ENCODE measurements at regions of chr5 and their contacts with region 1.

Region 1: DNA sequence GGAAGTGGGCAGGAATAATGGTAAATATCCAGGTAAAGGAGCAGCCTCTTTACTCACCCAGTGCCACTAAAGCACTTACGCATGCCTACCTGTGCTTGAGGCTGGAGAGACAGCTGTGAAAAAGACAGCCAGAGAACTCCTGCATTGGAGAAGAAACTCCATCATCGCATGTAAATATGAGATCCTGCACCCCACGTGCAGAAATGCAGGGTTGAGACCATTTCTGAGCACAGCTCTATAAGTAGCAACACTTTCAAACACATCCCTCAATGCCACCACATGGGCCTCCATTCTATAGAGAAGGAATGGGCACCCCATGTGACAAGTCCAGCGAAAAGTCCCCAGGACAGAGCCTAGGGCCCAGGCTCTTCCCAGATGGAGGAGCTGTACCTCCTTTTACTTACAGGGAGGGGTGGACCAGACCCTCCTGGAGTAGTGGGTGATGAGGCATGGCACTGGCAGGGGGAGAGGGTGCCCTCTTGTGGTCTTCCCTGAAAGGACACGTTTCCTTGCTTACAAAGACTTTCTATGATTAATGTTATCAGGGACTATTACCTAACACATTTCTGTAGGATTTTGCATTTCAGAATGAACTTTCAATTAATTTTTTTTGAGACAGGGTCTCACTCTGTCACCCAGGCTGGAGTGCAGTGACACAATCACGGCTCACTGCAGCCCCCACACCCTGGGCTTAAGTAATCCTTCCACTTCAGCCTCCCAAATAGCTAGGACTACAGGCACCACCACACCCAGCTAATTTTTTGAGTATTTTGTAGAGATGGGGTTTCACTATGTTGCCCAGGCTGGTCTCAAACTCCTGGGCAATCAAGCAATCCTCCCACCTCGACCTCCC is 55.3 kb upstream of the IL17B start:
- DNase-seq: peak; percentile 62 to 87
- H3K4me3 ChIP-seq: no peak overlapping the region
- H3K27ac ChIP-seq: no peak overlapping the region
- H3K4me1 ChIP-seq: peaks cover 0 to 5% (median 2%) of the 10 kb centered on the region in 4 experiments; a peak in 2 of 7 replicates
- H3K27me3 ChIP-seq: no peaks in the 10 kb centered on the region
- CTCF ChIP-seq: peak; percentile 80 to 90 (median 88)
- EP300 ChIP-seq: no peak
- POLR2A ChIP-seq: no peak
- RAD21 ChIP-seq: peak; percentile 82 to 88

Region 2: DNA sequence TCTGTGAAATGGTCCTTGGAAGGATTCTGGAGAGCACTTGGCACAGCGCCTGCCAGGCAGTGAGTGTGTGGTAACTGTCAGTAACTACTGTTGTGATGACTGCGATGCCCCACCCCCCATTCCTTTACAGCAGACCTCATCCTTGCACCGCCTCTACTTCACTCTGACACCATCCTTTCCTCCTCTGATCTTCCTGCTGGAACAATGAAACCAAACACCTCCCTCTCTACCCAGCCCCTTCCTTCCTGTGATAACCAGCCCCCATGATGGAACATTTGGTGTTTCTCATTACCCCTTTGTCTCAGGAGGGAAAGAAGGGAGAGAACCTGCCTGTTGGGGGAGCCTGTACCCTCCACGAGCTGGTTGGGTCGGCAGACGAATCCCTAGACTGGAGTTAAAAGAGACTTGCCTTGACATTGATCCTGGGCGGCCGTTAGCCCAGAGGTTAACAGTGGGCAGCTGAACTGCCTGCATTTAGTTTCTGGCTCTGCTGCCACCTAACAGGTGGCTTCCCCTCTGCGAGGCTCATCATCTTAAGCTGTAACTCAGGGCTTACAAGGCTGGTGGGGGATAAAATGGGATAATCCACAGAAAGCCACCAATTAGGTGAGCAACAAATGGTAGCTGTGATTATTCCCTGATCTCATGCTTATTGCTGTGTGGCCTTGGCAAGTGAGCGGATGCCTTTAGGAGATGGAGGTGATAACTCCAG is 123.3 kb before region 1 on chr5:
- CTCF ChIA-PET with region 1: interaction called, 17 read pairs
- POLR2A ChIA-PET with region 1: no interaction called
- DNase-seq: no peak
- H3K4me3 ChIP-seq: no peak overlapping the region
- H3K27ac ChIP-seq: no peak overlapping the region
- H3K4me1 ChIP-seq: peaks cover 0 to 3% (median 1%) of the 10 kb centered on the region in 4 experiments; a peak in 1 of 7 replicates
- H3K27me3 ChIP-seq: no peaks in the 10 kb centered on the region
- CTCF ChIP-seq: peak in 1 of 3 experiments; percentile 13; a peak in 1 of 4 replicates
- EP300 ChIP-seq: no peak
- POLR2A ChIP-seq: no peak
- RAD21 ChIP-seq: no peak

Region 3: GRCh38 chr5:149400304-149400703 is 34.1 kb before region 1 on chr5:
- CTCF ChIA-PET with region 1: interaction called, 1,310 read pairs
- POLR2A ChIA-PET with region 1: interaction called, 3 read pairs
- DNase-seq: no peak
- H3K4me3 ChIP-seq: no peak overlapping the region
- H3K27ac ChIP-seq: no peak overlapping the region
- H3K4me1 ChIP-seq: no peaks in the 10 kb centered on the region; a peak in 1 of 7 replicates
- H3K27me3 ChIP-seq: no peaks in the 10 kb centered on the region; a peak in 1 of 7 replicates
- CTCF ChIP-seq: no peak
- EP300 ChIP-seq: no peak
- POLR2A ChIP-seq: no peak
- RAD21 ChIP-seq: no peak

Region 4: DNA sequence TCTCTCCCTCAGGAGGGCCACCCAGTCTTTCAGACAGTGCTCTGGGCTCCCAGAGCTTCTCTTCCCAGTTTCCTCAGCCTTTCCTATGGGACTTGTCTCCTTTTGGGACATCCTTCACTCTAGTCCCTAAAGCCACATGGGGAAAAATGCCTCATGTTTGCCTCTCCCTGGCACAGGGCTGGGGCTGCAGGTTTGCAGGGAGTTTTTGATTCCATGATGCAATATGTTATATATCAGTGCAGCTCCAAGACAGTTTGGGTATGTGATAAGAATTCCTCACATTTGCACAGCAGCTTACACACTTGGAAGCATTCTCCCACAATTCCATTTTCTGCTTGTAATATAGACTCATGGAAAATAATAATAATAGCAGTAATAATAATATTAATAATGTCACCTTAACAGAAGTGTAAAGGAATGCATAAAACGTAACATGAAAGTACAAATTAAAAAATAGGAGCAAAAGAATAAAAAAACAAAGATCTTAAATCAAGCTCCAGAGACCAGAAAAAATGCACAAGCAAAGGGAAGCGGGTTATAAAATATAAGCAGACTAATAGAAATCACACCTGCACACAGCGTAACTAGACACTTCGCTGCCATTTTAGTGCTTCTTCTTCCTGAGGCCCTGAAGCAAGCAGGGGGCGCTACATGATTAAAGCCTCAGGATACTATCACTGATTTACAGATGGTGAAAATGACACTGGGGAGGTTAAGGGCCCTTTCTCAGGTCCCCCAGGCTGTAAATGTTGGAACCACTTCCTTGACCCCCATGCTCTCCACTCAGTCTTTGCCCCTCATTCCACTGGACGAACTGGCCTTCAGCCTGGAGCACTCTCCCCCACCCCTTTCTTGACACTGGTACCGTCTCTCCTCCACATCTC is 14.7 kb after region 1 on chr5:
- CTCF ChIA-PET with region 1: interaction called, 188 read pairs
- POLR2A ChIA-PET with region 1: interaction called, 3 read pairs
- DNase-seq: no peak
- H3K4me3 ChIP-seq: no peak overlapping the region
- H3K27ac ChIP-seq: no peak overlapping the region
- H3K4me1 ChIP-seq: peaks cover 0 to 19% (median 8%) of the 10 kb centered on the region in 4 experiments; a peak in 6 of 7 replicates
- H3K27me3 ChIP-seq: no peaks in the 10 kb centered on the region
- CTCF ChIP-seq: peak; percentile 17 to 67 (median 45); a peak in 3 of 4 replicates
- EP300 ChIP-seq: no peak
- POLR2A ChIP-seq: no peak
- RAD21 ChIP-seq: peak; percentile 62 to 69

Region 5: DNA sequence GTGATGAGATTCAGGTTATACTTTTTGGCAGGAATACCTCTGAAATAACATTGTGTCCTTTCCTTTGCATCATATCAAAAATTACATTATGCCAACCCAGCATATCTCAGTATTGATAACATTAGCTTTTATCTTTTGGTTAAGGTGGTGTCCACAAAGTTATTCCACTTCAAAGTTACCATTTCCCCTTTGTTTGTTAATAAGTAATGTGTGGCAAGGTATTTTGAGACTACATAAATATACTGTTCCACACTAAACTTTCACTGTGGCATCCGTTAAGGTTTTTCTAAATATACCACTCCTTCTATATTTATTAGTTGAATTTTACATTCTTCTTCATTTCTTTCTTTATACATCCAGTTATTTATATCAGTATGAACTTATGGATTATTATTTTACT is 132.8 kb after region 1 on chr5:
- CTCF ChIA-PET with region 1: interaction called, 111 read pairs
- POLR2A ChIA-PET with region 1: no interaction called
- DNase-seq: no peak
- H3K4me3 ChIP-seq: no peak overlapping the region
- H3K27ac ChIP-seq: no peak overlapping the region
- H3K4me1 ChIP-seq: peaks cover 0 to 7% (median 4%) of the 10 kb centered on the region in 4 experiments; a peak in 3 of 7 replicates
- H3K27me3 ChIP-seq: no peaks in the 10 kb centered on the region
- CTCF ChIP-seq: no peak
- EP300 ChIP-seq: no peak
- POLR2A ChIP-seq: no peak
- RAD21 ChIP-seq: no peak

Region 6: DNA sequence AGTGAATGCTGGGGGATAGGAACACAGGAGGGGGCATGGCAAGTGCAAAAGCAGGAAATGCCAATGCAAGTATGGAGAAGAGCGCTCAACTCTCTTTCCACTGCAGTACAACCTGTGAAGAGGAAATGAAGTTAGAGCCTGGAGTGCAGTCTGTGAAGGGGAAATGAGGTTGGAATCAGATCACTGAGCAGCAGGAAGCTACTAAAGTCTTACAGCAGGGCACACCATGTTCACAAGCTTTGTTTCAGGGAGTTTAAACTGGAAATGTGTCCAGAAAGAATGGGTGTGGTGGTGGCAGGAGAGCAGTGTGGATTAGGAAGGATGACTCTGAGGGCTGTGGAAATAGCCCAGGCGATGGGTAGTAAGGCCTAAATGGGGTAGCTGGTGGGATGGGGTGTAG is 162.3 kb after region 1 on chr5:
- CTCF ChIA-PET with region 1: interaction called, 10 read pairs
- POLR2A ChIA-PET with region 1: no interaction called
- DNase-seq: no peak
- H3K4me3 ChIP-seq: no peak overlapping the region
- H3K27ac ChIP-seq: no peak overlapping the region
- H3K4me1 ChIP-seq: peaks cover 0 to 3% (median 0%) of the 10 kb centered on the region in 4 experiments; a peak in 2 of 7 replicates
- H3K27me3 ChIP-seq: no peaks in the 10 kb centered on the region
- CTCF ChIP-seq: no peak
- EP300 ChIP-seq: no peak
- POLR2A ChIP-seq: no peak
- RAD21 ChIP-seq: no peak

Region 7: DNA sequence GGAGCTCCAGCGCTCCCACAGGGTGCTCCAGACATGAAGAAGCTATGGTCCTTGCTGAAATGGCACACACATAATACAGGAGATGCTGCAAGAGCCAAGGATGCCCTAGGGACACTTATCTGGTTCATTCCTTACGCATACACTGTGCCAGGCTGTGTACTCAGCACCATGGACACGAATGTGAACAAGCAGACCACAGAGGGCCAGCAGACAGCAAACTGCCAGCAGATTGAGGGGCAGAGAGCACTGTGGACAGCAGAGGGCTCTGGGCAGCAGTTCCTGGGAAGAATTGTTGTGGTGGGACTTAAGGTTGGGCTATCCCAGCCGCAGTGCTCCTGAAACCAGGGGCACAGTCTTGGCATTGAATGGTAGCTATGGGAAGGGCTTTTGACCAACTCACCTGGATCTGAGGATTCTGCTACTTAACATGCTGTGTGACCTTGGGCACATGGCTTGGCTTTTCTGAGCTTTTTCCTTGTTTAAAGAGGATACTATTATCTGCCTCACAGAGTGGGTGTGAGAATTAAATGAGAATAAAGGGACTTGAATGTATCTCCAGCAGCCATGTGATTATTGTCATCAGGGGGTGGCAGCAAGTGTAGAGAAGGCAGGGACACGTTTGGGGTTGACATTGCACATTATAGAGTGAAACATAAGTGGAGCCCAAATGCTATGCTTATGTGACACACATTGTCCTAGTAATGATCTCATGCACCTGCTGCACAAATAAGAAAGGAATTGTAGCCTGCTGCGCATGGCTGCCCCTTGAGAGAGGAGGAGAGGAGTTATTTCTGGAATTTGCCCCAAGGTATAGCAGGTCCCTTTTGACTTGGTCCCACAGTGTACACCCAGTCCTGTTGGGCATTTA is 325.8 kb after region 1 on chr5:
- CTCF ChIA-PET with region 1: no interaction called
- POLR2A ChIA-PET with region 1: no interaction called
- DNase-seq: no peak
- H3K4me3 ChIP-seq: no peak overlapping the region
- H3K27ac ChIP-seq: no peak overlapping the region
- H3K4me1 ChIP-seq: peaks cover 0 to 6% (median 2%) of the 10 kb centered on the region in 4 experiments; a peak in 1 of 7 replicates
- H3K27me3 ChIP-seq: no peaks in the 10 kb centered on the region
- CTCF ChIP-seq: peak in 2 of 3 experiments; percentile 12 to 40; a peak in 1 of 4 replicates
- EP300 ChIP-seq: no peak
- POLR2A ChIP-seq: no peak
- RAD21 ChIP-seq: peak in 1 of 2 experiments; percentile 32; a peak in 2 of 4 replicates

Region 8: GRCh38 chr5:149961957-149962409 is 527.6 kb after region 1 on chr5:
- CTCF ChIA-PET with region 1: no interaction called
- POLR2A ChIA-PET with region 1: no interaction called
- DNase-seq: no peak
- H3K4me3 ChIP-seq: no peak overlapping the region
- H3K27ac ChIP-seq: no peak overlapping the region
- H3K4me1 ChIP-seq: peaks cover 0 to 8% (median 5%) of the 10 kb centered on the region in 4 experiments; a peak in 4 of 7 replicates
- H3K27me3 ChIP-seq: peaks cover 0 to 5% (median 1%) of the 10 kb centered on the region in 4 experiments; a peak in 3 of 7 replicates
- CTCF ChIP-seq: peak in 2 of 3 experiments; percentile 48 to 49; a peak in 3 of 4 replicates
- EP300 ChIP-seq: no peak
- POLR2A ChIP-seq: no peak
- RAD21 ChIP-seq: peak; percentile 47 to 57